ENCODE measurements at regions of chr5 and their contacts with region 1.

Region 1: DNA sequence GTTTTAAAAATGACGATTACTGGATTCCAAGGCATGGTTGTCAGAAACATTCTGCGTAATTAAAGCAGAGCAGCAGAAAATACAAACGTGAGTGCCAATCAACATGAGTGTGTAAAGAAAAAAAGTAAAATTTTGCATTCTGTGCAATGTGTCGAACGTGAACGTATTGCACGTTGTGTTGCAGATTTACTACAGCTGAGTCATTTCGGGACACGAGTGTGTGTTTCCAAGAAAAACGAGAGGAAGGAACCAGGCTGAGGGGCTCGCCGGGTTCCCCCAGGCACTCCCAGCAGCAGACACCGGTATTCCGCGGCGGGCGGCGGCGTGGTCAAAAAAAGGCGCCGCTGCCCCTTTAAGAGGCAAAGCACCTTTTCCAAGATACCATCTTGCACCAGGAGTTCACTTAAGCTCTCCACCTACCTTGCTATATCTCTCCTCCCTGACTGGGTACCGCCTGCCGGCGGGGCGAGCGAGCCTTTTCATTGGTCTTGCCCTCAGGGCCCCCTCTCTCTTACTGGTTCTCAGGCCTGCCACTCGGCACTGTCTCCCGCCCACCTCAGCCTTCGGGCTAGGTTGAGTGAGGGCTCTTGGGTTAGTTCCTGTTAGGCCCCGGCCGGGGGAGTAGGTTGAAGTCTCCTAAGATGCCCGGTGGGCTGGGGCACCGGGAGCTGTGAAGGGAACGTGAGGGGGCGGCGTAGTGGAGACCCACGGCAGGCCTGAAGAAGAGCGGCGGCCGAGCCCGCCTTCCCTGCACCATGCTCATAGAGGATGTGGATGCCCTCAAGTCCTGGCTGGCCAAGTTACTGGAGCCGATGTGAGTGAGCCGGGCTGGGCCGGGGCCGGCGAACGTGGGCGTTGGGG is at the start of gene RBM27:
- DNase-seq: peak; percentile 99
- H3K4me3 Mint-ChIP-seq: no peak within 1 kb of the TSS
- H3K27ac Mint-ChIP-seq: no peak within 1 kb of the TSS
- H3K4me1 Mint-ChIP-seq: peaks cover 12% of the 10 kb centered on the region
- H3K27me3 Mint-ChIP-seq: no peaks in the 10 kb centered on the region
- total RNA-seq, gene RBM27: 28.9 and 33.2 TPM in 2 replicates

Region 2: GRCh38 chr5:146238973-146239372 is 35.7 kb after region 1 on chr5:
- intact Hi-C with region 1: loop called (anchors 2 kb)
- DNase-seq: no peak
- H3K4me3 Mint-ChIP-seq: no peak overlapping the region
- H3K27ac Mint-ChIP-seq: peak overlapping the region; percentile 17
- H3K4me1 Mint-ChIP-seq: peaks cover 6% of the 10 kb centered on the region
- H3K27me3 Mint-ChIP-seq: no peaks in the 10 kb centered on the region

Region 3: GRCh38 chr5:146446853-146447733 is 243.9 kb after region 1 on chr5 and contains the start of gene TCERG1:
- intact Hi-C with region 1: loop called (anchors 1 kb)
- DNase-seq: peak; percentile 99
- H3K4me3 Mint-ChIP-seq: peak within 1 kb of the TSS; percentile 100
- H3K27ac Mint-ChIP-seq: peak within 1 kb of the TSS; percentile 100
- H3K4me1 Mint-ChIP-seq: peaks cover 27% of the 10 kb centered on the region
- H3K27me3 Mint-ChIP-seq: peaks cover 3% of the 10 kb centered on the region
- total RNA-seq, gene TCERG1: 146 and 155 TPM in 2 replicates